Activated CD4-positive, alpha-beta T cell treated with anti-CD3 and anti-CD28 coated beads, Interleukin-2, amount 10 ng/mL, durations not matched to agents 24 days and 14 days (primary cell): ENCODE measurements at regions of chr10 and their contacts with region 1.

Region 1: GRCh38 chr10:50152792-50153272 is 85.1 kb downstream of the WASHC2A start:
- DNase-seq: no peak
- H3K4me3 Mint-ChIP-seq: no peak overlapping the region
- H3K27ac Mint-ChIP-seq: no peak overlapping the region
- H3K4me1 Mint-ChIP-seq: no peaks in the 10 kb centered on the region
- H3K27me3 Mint-ChIP-seq: peaks cover 20% of the 10 kb centered on the region

Region 2: GRCh38 chr10:50027195-50027594 is 125.6 kb before region 1 on chr10:
- intact Hi-C with region 1: loop called (anchors 5 kb)
- DNase-seq: no peak
- H3K4me3 Mint-ChIP-seq: no peak overlapping the region
- H3K27ac Mint-ChIP-seq: no peak overlapping the region
- H3K4me1 Mint-ChIP-seq: no peaks in the 10 kb centered on the region
- H3K27me3 Mint-ChIP-seq: peaks cover 22% of the 10 kb centered on the region